IMR-90 (cell line): ENCODE measurements at regions of chr6 and their contacts with region 1.

Region 1: GRCh38 chr6:45703041-45703739 is 312.5 kb downstream of the CLIC5 start:
- DNase-seq: peak; percentile 81
- ATAC-seq: peak; percentile 70
- H3K4me3 ChIP-seq: no peak overlapping the region
- H3K27ac ChIP-seq: no peak overlapping the region
- H3K4me1 ChIP-seq: peaks cover 9% of the 10 kb centered on the region
- H3K27me3 ChIP-seq: no peaks in the 10 kb centered on the region
- CTCF ChIP-seq: no peak
- POLR2A ChIP-seq: no peak
- RAD21 ChIP-seq: no peak

Region 2: GRCh38 chr6:45631395-45631794 is 71.8 kb before region 1 on chr6:
- CTCF ChIA-PET with region 1: no interaction called
- POLR2A ChIA-PET with region 1: no interaction called
- dilution Hi-C with region 1: no loop called
- in situ Hi-C with region 1: no loop called
- intact Hi-C with region 1: loop called (anchors 5 kb)
- DNase-seq: no peak
- ATAC-seq: no peak
- H3K4me3 ChIP-seq: no peak overlapping the region
- H3K27ac ChIP-seq: no peak overlapping the region
- H3K4me1 ChIP-seq: peaks cover 13% of the 10 kb centered on the region
- H3K27me3 ChIP-seq: no peaks in the 10 kb centered on the region
- CTCF ChIP-seq: no peak
- POLR2A ChIP-seq: no peak
- RAD21 ChIP-seq: no peak

Region 3: DNA sequence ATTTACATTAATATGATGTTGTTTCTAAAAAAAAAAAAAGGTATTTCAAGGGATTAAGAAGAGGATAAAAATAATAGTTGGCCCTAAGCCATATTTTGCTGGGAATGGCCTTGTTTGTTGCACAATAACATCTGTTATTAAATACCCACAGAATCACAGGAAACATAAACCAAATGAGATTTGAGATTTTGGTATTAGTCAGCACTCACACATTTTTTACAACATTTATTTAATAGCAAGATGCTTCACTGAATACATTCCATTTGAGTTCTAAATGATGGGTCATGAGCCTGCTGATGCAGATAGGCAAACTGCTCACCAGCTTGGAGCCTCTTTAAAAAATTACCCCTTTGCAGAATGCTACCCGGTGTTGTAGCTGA is 560.5 kb after region 1 on chr6:
- CTCF ChIA-PET with region 1: no interaction called
- POLR2A ChIA-PET with region 1: no interaction called
- dilution Hi-C with region 1: no loop called
- in situ Hi-C with region 1: no loop called
- intact Hi-C with region 1: no loop called
- DNase-seq: peak; percentile 20
- ATAC-seq: no peak
- H3K4me3 ChIP-seq: no peak overlapping the region
- H3K27ac ChIP-seq: no peak overlapping the region
- H3K4me1 ChIP-seq: no peaks in the 10 kb centered on the region
- H3K27me3 ChIP-seq: no peaks in the 10 kb centered on the region
- CTCF ChIP-seq: no peak
- POLR2A ChIP-seq: no peak
- RAD21 ChIP-seq: no peak